ENCODE measurements at regions of chr15 and their contacts with region 1.

Region 1: DNA sequence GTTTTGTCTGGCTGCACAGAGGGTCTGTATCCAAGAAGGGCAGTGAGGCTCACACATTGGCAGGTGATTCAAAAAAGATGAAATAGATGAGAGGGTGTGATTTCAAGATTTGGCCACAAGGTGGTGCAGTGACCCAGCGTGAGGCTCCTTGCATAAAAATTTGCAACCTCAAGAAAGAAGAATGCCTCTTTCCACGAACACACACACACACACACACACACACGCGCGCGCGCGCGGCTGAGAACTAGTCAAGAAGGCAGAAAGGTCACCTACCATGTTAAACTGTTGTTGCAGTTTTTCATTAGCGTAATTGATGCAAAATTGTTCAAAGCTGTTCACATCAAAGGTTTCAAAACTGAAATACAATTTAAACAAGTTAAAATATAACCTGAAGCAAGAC is 39.2 kb downstream of the MYO5C start:
- DNase-seq: no peak
- H3K4me3 ChIP-seq: no peak overlapping the region
- H3K27ac ChIP-seq: no peak overlapping the region
- H3K4me1 ChIP-seq: peaks cover 15% of the 10 kb centered on the region
- H3K27me3 ChIP-seq: no peaks in the 10 kb centered on the region
- CTCF ChIP-seq: peak; percentile 55 to 88 (median 73)
- POLR2A ChIP-seq: no peak

Region 2: DNA sequence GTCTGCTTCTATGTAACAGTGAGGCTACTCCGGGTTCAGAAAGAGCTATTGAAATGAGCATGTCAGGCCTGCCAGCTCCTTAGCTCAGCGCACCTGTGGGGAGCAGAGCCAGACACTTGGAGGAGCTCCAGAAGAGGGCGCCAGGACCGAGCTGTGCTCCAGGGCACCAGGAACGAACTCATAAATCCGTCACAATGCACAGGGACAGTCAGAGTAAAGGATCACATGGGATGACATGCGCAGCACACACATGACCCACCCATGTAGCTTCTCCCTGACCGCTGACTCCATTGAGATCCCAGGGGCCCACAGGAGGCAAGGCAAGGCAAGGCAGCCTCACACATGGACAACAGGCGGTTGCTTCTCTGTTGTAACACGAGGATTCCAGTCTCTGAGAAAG is 39.2 kb before region 1 on chr15:
- intact Hi-C with region 1: no loop called
- DNase-seq: peak in 1 of 2 donors; percentile 75
- H3K4me3 ChIP-seq: no peak overlapping the region
- H3K27ac ChIP-seq: no peak overlapping the region
- H3K4me1 ChIP-seq: no peaks in the 10 kb centered on the region
- H3K27me3 ChIP-seq: no peaks in the 10 kb centered on the region
- CTCF ChIP-seq: no peak
- POLR2A ChIP-seq: no peak

Region 3: GRCh38 chr15:52455412-52455811 is 199.0 kb after region 1 on chr15:
- intact Hi-C with region 1: no loop called
- DNase-seq: no peak
- H3K4me3 ChIP-seq: no peak overlapping the region
- H3K27ac ChIP-seq: no peak overlapping the region
- H3K4me1 ChIP-seq: no peaks in the 10 kb centered on the region
- H3K27me3 ChIP-seq: no peaks in the 10 kb centered on the region
- CTCF ChIP-seq: no peak
- POLR2A ChIP-seq: no peak

Region 4: GRCh38 chr15:52735231-52736089 is 479.1 kb after region 1 on chr15:
- intact Hi-C with region 1: loop called (anchors 5 kb)
- DNase-seq: no peak
- H3K4me3 ChIP-seq: no peak overlapping the region
- H3K27ac ChIP-seq: no peak overlapping the region
- H3K4me1 ChIP-seq: no peaks in the 10 kb centered on the region
- H3K27me3 ChIP-seq: no peaks in the 10 kb centered on the region
- CTCF ChIP-seq: peak; percentile 80 to 94 (median 87)
- POLR2A ChIP-seq: no peak